Activated naive CD4-positive, alpha-beta T cell treated with anti-CD3 and anti-CD28 coated beads for 36 hours (primary cell): ENCODE measurements at regions of chr19 and their contacts with region 1.

Region 1: GRCh38 chr19:41449079-41449864 is 6.3 kb downstream of the ERICH4 start:
- DNase-seq: peak; percentile 84
- H3K4me3 Mint-ChIP-seq: peak overlapping the region; percentile 77
- H3K27ac Mint-ChIP-seq: peak overlapping the region; percentile 56
- H3K4me1 Mint-ChIP-seq: peaks cover 11% of the 10 kb centered on the region
- H3K27me3 Mint-ChIP-seq: no peaks in the 10 kb centered on the region

Region 2: DNA sequence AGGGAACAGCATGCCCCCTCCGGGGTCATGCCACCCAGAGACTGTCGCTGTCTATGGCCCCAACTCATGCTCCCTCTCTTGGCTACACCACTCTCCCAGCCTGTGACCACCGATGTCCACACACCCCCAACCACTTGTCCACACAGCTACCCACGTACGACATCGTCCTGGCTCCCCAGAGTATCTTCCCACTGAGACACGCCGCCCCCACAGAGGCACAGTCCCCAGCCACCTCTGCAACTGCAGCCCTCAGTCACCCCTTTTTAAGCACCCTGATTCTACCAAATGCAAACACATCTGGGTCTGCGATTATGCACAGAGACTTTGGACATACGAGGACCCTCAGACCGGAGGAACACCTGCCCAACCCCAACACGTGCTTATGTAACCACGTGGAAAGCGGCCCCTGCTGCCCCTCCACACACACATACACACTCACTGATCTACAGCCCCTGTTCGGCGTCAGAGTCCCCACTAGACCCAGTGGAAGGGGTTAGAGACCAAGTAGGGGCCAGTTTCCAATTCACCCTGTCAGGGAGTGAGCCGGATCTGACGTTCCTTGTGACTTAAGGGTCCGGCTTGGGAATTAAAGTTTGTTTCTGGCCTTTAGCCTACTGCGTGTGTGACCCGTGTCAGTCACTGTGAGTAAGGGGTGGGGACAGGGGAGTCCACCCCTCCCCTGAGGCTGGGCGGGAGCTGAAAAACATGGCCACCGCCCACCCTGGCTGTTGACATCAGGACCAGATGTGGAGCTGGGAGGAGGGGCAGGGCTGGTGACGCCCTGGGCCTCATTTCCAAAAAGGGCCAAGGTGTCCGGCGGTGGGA is 242.1 kb before region 1 on chr19:
- CTCF ChIA-PET with region 1: interaction called, 6 read pairs
- intact Hi-C with region 1: loop called (anchors 5 kb)
- DNase-seq: no peak
- H3K4me3 Mint-ChIP-seq: no peak overlapping the region
- H3K27ac Mint-ChIP-seq: no peak overlapping the region
- H3K4me1 Mint-ChIP-seq: peaks cover 4% of the 10 kb centered on the region
- H3K27me3 Mint-ChIP-seq: no peaks in the 10 kb centered on the region

Region 3: DNA sequence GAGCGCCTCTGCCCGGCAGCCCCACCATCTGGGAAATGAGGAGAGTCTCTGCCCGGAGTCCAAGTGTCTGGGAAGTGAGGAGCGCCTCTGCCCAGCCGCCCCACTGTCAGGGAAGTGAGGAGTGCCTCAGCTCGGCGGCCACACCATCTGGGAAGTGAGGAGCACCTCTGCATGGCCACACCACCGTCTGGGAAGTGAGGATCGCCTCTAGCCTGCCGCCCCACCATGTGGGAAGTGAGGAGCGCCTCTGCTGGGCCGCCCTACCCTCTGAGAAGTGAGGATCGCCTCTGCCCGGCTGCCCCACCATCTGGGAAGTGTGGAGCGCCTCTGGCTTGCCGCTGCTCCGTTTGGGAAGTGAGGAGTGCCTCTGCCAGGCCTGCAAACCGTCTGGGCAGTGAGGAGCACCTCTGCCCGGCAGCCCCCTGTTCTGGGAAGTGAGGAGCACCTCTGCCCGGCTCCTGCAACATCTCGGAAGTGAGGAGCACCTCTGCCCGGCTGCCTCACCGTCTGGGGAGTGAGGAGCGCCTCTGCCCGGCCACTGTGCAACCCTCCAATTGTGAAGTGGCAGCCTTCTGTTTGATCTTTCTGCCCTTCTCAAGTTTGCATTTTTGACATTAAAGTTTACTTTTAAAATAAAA is 65.9 kb after region 1 on chr19:
- CTCF ChIA-PET with region 1: interaction called, 9 read pairs
- intact Hi-C with region 1: loop called (anchors 5 kb)
- DNase-seq: no peak
- H3K4me3 Mint-ChIP-seq: no peak overlapping the region
- H3K27ac Mint-ChIP-seq: no peak overlapping the region
- H3K4me1 Mint-ChIP-seq: peaks cover 10% of the 10 kb centered on the region
- H3K27me3 Mint-ChIP-seq: no peaks in the 10 kb centered on the region

Region 4: GRCh38 chr19:41531438-41532311 is 82.4 kb after region 1 on chr19:
- CTCF ChIA-PET with region 1: interaction called, 33 read pairs
- intact Hi-C with region 1: no loop called
- DNase-seq: peak; percentile 95
- H3K4me3 Mint-ChIP-seq: peak overlapping the region; percentile 78
- H3K27ac Mint-ChIP-seq: peak overlapping the region; percentile 90
- H3K4me1 Mint-ChIP-seq: peaks cover 52% of the 10 kb centered on the region
- H3K27me3 Mint-ChIP-seq: no peaks in the 10 kb centered on the region

Region 5: GRCh38 chr19:41541990-41542584 is 92.8 kb after region 1 on chr19:
- CTCF ChIA-PET with region 1: interaction called, 33 read pairs
- intact Hi-C with region 1: loop called (anchors 1 kb)
- DNase-seq: peak; percentile 93
- H3K4me3 Mint-ChIP-seq: peak overlapping the region; percentile 41
- H3K27ac Mint-ChIP-seq: peak overlapping the region; percentile 82
- H3K4me1 Mint-ChIP-seq: peaks cover 65% of the 10 kb centered on the region
- H3K27me3 Mint-ChIP-seq: no peaks in the 10 kb centered on the region

Region 6: GRCh38 chr19:41548954-41549688 is 99.8 kb after region 1 on chr19:
- CTCF ChIA-PET with region 1: interaction called, 21 read pairs
- intact Hi-C with region 1: no loop called
- DNase-seq: peak; percentile 90
- H3K4me3 Mint-ChIP-seq: peak overlapping the region; percentile 99
- H3K27ac Mint-ChIP-seq: peak overlapping the region; percentile 100
- H3K4me1 Mint-ChIP-seq: peaks cover 57% of the 10 kb centered on the region
- H3K27me3 Mint-ChIP-seq: no peaks in the 10 kb centered on the region